AG04450 (cell line): ENCODE measurements at regions of chr1 and their contacts with region 1.

Region 1: DNA sequence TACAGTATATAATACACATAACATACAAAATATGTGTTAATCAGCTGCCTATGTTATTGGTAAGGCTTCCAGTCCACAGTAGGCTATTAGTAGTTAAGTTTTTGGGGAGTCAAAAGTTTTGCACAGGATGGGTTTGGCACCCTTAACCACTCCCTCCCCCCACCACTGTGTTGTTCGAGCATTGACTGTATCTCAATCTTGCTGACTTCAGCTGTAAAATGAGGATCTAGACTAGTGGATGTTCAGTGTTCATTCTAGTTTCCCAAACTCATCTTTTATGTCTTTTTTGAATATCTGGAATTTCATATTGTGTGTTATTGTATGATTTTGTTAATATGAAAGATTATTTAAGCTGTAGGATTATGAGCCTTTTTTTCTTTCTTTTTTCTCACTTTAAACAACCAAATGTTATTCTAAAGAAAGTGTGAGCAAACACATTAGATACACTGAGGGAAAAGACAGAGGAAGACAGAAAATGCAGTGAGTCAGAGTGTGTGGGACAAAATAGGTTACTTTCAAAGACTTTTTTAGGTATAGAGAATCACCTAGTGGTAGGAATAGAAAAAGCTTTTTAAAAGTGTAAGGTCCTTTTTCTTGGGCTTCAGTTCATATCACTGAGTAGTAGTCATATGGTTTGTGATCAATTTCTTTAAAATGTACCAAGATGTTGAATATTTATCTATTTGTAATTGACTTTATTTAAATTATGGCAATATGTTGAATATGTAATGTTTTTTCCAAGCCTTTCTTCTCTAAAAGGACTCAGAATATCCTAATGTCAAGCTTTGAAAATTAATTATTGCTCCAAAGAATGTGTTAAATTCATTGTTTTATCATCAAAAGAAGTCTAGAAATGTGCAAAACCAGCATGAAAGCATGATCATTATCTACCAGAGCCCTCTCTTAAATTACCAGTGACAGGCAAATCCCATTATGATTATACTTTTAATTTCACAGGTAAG is 17.9 kb upstream of the CENPF start:
- DNase-seq: peak; percentile 26
- H3K4me3 ChIP-seq: no peak overlapping the region
- H3K27ac ChIP-seq: no peak overlapping the region
- H3K27me3 ChIP-seq: no peaks in the 10 kb centered on the region
- CTCF ChIP-seq: peak; percentile 86

Region 2: DNA sequence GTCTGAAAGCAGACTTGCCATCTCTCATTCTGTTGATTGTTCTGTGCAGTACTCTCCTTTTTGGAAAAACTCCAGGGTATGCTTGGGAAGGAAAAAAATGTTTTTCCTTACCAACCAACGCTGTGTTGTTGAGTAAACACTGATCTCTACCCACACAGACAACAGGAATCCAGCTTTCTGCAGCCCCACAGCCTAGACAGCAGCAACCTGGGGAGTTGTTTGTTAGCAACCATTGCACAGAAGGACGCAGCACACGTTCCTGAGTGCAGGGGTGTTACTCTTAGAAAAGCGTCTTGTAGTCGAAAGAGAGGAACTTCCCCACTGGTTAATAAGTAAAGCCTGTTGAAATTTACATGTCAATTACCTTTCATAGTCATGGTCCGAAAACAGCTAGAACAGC is 247.6 kb before region 1 on chr1:
- CTCF ChIA-PET with region 1: interaction called, 278 read pairs
- POLR2A ChIA-PET with region 1: no interaction called
- DNase-seq: peak; percentile 34
- H3K4me3 ChIP-seq: no peak overlapping the region
- H3K27ac ChIP-seq: peak overlapping the region; percentile 52
- H3K27me3 ChIP-seq: no peaks in the 10 kb centered on the region
- CTCF ChIP-seq: no peak

Region 3: GRCh38 chr1:214386747-214387146 is 198.3 kb before region 1 on chr1:
- CTCF ChIA-PET with region 1: interaction called, 16 read pairs
- POLR2A ChIA-PET with region 1: no interaction called
- DNase-seq: no peak
- H3K4me3 ChIP-seq: no peak overlapping the region
- H3K27ac ChIP-seq: no peak overlapping the region
- H3K27me3 ChIP-seq: no peaks in the 10 kb centered on the region
- CTCF ChIP-seq: no peak

Region 4: GRCh38 chr1:214551436-214552173 is 33.5 kb before region 1 on chr1 and contains the start of gene PTPN14:
- CTCF ChIA-PET with region 1: interaction called, 26 read pairs
- POLR2A ChIA-PET with region 1: interaction called, 9 read pairs
- DNase-seq: peak; percentile 87
- H3K4me3 ChIP-seq: peak within 1 kb of the TSS; percentile 96
- H3K27ac ChIP-seq: peak within 1 kb of the TSS; percentile 99
- H3K27me3 ChIP-seq: no peaks in the 10 kb centered on the region
- CTCF ChIP-seq: peak; percentile 51
- polyA plus RNA-seq, gene PTPN14: 30.3 and 34.2 TPM in 2 replicates

Region 5: DNA sequence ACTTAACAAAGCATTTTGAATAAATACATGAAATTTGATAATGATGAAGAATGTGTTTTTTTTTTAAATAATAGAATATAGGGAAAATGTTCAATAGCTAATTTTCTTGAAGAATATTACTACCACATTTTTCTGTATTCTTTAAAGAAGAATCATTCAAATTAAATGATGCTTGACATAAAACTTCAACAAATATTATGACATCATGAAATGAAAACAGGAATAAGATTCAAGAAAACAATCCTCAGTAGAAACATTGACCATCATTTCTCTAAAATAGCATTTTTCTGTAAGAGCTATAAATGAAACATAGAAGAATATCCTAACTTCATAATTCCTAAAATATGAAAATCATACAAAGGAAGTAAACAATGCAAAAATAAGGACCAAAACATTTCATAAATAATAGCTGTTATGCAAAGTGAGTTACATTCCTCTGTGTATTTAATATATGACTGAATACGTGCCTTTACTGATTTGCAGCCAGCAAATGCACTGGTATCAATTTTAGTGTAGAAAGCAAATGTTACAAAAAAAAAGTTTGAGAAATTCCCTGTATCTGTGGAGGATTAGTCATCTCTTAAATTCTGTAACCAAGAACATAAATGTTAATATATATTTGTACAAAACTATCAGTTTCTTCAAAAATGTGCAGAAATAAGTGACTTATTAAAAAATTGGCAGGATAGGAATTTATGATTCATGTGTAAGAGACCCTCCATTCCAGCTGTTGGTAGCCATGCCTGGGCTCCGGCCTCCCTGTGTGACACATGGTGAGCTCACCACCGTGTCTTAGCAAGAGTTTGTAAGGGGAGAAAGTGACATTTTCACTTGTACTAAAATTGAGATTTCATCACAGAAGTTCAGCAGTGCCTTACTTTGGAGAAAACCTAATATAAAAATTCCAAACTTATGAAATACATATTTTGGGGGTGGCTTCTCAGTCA is 18.7 kb before region 1 on chr1:
- CTCF ChIA-PET with region 1: interaction called, 14 read pairs
- POLR2A ChIA-PET with region 1: no interaction called
- DNase-seq: no peak
- H3K4me3 ChIP-seq: no peak overlapping the region
- H3K27ac ChIP-seq: no peak overlapping the region
- H3K27me3 ChIP-seq: no peaks in the 10 kb centered on the region
- CTCF ChIP-seq: no peak